ENCODE measurements at regions of chr12 and their contacts with region 1.

Region 1: GRCh38 chr12:106223485-106224354 is 24.1 kb downstream of the CKAP4 start:
- DNase-seq: peak; percentile 62 to 86 (median 74)
- H3K4me3 ChIP-seq: no peak overlapping the region
- H3K27ac ChIP-seq: peak overlapping the region in 2 of 5 donors; percentile 18 to 40
- H3K4me1 ChIP-seq: peaks cover 0 to 8% of the 10 kb centered on the region in 2 donors
- H3K27me3 ChIP-seq: no peaks in the 10 kb centered on the region
- CTCF ChIP-seq: peak; percentile 85 to 93 (median 90)
- POLR2A ChIP-seq: no peak

Region 2: DNA sequence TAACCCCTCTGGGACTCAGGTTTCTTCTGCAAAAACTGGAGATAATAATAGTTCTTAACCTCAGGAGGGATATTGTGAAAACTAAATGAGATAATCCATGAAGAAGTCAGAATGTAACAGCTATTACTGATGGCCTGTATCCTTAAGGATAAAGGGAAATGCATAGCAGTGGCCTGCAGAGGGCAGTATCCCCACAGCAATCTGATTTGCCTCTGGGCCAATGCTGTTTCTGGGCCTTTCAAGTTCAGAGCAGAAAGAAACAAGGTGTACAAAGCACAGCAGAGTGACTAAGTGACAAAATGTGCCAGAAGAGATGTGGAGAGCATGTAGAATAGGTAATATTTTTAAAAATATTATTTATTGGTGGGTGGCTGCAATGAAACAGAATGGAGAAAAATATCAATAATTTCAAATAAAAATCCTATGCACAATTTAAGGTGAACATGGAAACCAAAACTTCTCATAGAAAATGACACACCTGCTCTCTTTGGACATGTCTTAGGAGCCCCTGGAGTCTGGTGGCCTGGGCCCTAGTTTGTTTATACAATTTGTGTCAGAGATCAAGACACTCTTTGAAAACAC is 803.0 kb before region 1 on chr12:
- intact Hi-C with region 1: loop called in 1 of 2 experiments (anchors 5 kb)
- DNase-seq: peak; percentile 57 to 92 (median 75)
- H3K4me3 ChIP-seq: no peak overlapping the region
- H3K27ac ChIP-seq: no peak overlapping the region
- H3K4me1 ChIP-seq: no peaks in the 10 kb centered on the region
- H3K27me3 ChIP-seq: no peaks in the 10 kb centered on the region
- CTCF ChIP-seq: peak; percentile 87 to 97 (median 94)
- POLR2A ChIP-seq: no peak

Region 3: DNA sequence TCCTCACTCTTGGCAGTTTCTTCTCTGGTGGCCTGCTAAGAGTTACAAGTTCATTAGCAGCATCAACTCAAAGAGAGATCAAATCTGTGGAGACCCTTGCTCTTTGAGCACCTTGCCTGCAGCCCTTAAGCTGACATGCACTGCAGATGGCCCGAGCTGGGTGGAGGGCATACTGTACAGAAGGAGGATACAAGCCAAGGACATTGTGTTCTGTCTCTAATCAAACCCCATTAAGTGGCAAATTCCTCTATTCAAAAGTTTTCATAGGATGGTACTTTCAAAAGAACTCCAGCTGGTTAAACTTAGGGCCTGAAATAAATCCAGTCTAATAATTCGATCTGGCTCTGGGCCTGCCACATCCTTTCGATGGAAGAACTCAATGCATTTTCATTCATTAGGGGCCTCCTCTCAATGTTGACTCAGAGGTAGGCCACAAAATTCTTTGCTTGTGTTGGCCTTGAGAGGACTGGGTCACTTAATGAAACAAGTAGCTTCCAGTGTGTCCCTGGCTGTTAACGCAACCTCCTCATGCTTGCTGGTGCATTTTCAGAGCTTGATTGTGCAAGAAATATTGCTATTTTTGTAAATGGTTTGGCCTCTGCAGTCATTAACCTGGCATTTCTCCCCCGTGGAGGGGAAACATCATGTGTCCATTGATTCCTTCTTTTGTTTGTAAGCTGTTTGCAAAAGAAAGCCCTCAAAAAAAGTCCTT is 403.1 kb before region 1 on chr12:
- intact Hi-C with region 1: no loop called
- DNase-seq: peak; percentile 43 to 85 (median 75)
- H3K4me3 ChIP-seq: no peak overlapping the region
- H3K27ac ChIP-seq: peak overlapping the region in 2 of 5 donors; percentile 36 to 50
- H3K4me1 ChIP-seq: peaks cover 15 to 20% of the 10 kb centered on the region in 2 donors
- H3K27me3 ChIP-seq: no peaks in the 10 kb centered on the region
- CTCF ChIP-seq: no peak
- POLR2A ChIP-seq: no peak

Region 4: GRCh38 chr12:106010741-106011140 is 213.0 kb before region 1 on chr12:
- intact Hi-C with region 1: no loop called
- DNase-seq: no peak
- H3K4me3 ChIP-seq: no peak overlapping the region
- H3K27ac ChIP-seq: no peak overlapping the region
- H3K4me1 ChIP-seq: no peaks in the 10 kb centered on the region
- H3K27me3 ChIP-seq: no peaks in the 10 kb centered on the region
- CTCF ChIP-seq: no peak
- POLR2A ChIP-seq: no peak

Region 5: DNA sequence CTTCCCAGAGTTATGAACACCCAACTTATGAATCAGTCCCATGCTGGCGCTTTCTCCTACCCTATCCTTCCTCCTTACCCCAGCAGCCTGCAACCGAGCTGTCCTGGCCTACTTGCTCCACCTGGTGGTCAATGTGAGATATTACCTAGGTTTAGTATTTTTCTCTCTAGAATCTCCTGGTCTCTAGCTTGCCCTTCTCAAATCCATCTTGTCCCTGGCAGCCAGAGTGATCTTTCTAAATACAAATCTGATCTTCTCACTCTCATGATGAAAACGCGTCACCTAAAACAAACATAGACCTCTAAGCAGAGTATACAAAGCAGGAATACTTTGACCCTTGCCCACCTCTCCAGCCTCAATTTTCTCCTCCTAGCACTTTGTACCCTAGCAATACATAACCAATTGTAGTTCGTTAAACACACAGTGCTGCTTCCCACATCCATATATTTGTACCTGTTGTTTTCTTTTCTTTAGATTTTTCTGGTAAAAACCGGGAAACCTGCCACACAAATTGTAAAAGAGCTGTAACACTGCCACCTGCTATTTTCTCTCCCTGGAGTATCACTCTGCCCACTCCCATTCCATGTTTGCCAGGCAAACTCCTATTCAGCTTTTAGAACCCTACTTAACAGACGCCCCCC is 58.9 kb after region 1 on chr12:
- intact Hi-C with region 1: loop called (anchors 2 to 5 kb)
- DNase-seq: peak; percentile 53 to 75 (median 69)
- H3K4me3 ChIP-seq: no peak overlapping the region
- H3K27ac ChIP-seq: no peak overlapping the region
- H3K4me1 ChIP-seq: no peaks in the 10 kb centered on the region
- H3K27me3 ChIP-seq: no peaks in the 10 kb centered on the region
- CTCF ChIP-seq: peak; percentile 77 to 88 (median 82)
- POLR2A ChIP-seq: no peak

Region 6: GRCh38 chr12:106357549-106358395 is 134.1 kb after region 1 on chr12 and contains the start of gene POLR3B:
- intact Hi-C with region 1: loop called in 1 of 2 experiments (anchors 5 kb)
- DNase-seq: peak; percentile 93 to 99 (median 97)
- H3K4me3 ChIP-seq: peak within 1 kb of the TSS in 3 of 4 donors; percentile 64 to 80 (median 70)
- H3K27ac ChIP-seq: peak within 1 kb of the TSS; percentile 57 to 96 (median 93)
- H3K4me1 ChIP-seq: peaks cover 16 to 23% of the 10 kb centered on the region in 2 donors
- H3K27me3 ChIP-seq: no peaks in the 10 kb centered on the region
- CTCF ChIP-seq: peak; percentile 80 to 92 (median 88)
- POLR2A ChIP-seq: peak; percentile 70 to 93
- total RNA-seq, gene POLR3B: 9.8 to 22.4 (median 14.1) TPM

Measured in adrenal gland (tissue), 19 donors.